Natural killer cell (primary cell): ENCODE measurements at regions of chr17 and their contacts with region 1.

Region 1: DNA sequence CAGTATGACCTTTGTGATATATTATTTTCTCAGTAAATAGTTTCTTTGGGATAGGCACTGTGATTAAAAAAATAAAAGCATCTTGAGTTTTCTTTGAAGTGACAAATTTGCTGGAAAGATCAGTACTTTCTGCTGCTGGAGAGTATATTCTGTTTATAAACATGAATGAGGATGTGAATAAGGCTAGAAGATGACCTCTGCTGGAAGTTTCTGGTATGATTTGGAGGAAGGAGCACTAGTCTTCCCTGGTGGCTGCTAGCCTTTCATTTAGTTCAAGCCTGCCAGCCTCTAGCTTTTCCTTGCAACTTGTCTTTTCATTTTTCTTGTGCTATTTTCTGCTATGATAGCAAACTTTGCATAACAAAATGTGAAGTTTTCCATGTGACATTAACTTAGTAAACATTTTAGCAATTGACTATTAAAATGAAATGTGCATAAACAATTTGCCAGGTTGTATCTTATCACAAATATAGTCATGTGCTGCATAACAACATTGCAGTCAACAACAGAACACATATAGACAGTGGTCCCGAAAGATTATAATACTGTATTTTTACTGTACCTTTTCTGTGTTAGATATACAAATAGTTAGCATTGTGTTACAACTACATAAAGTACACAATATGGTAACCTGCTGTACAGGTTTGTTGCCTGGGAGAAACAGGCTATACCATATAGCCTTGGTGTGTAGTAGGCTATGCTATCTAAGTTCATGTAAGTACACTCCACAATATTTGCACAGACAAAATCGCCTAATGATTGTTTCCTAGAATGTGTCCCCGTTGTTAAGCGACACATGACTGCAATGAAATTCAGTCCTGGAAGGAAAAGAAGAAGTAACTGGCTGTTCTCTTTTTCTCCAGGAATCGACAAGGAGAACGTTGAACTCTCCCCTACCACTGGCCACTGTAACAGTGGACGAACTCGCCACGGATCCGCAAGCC is 18.1 kb upstream of the RAB11FIP4 start:
- DNase-seq: peak in 1 of 2 donors; percentile 78
- ATAC-seq: peak; percentile 75 to 84 (median 81)
- H3K4me3 ChIP-seq: no peak overlapping the region
- H3K4me3 Mint-ChIP-seq: no peak overlapping the region
- H3K27ac ChIP-seq: no peak overlapping the region
- H3K27ac Mint-ChIP-seq: no peak overlapping the region
- H3K4me1 ChIP-seq: peaks cover 4% of the 10 kb centered on the region
- H3K4me1 Mint-ChIP-seq: no peaks in the 10 kb centered on the region
- H3K27me3 ChIP-seq: no peaks in the 10 kb centered on the region
- H3K27me3 Mint-ChIP-seq: no peaks in the 10 kb centered on the region
- CTCF ChIP-seq: peak; percentile 73

Region 2: GRCh38 chr17:31266042-31266441 is 107.4 kb before region 1 on chr17:
- intact Hi-C with region 1: loop called (anchors 1 kb)
- DNase-seq: peak in 1 of 2 donors; percentile 53
- ATAC-seq: no peak
- H3K4me3 ChIP-seq: no peak overlapping the region
- H3K4me3 Mint-ChIP-seq: no peak overlapping the region
- H3K27ac ChIP-seq: no peak overlapping the region
- H3K27ac Mint-ChIP-seq: no peak overlapping the region
- H3K4me1 ChIP-seq: no peaks in the 10 kb centered on the region
- H3K4me1 Mint-ChIP-seq: no peaks in the 10 kb centered on the region
- H3K27me3 ChIP-seq: no peaks in the 10 kb centered on the region
- H3K27me3 Mint-ChIP-seq: no peaks in the 10 kb centered on the region
- CTCF ChIP-seq: no peak

Region 3: DNA sequence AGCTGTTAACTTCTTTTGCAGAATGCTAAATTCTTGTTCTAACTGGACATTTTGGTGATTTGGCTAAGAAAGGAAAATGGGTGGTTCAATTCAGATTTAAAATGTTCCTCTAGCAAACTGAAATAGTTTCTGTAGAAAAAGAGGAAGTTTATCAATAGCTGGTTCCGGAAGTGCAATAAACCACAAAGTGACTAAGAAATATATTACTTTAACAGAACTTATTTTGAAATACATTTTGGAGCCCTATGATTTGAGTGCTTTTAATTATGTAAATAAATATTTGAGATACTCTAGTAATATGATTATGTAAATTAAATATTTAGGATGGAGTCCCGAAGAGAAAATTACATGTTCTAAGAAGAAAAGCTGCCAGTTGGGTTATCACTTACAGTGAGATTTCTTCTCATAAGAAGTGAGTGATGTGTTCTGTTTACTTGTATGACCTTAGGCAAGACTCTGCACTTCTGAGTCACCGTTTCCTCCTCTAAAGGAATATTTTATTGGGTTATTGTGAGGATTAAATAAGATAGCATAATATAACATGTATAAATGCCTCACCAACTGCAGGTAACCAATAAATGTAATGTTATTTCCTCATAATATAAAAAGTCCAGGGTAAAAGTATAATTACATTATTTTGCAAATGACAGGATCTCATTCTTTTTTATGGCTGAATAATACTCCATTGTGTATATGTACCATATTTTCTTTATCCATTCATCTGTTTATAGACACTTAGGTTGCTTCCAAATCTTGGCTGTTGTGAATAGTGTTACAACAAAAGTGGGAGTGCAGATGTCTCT is 59.2 kb before region 1 on chr17 and contains the start of gene EVI2B:
- intact Hi-C with region 1: loop called (anchors 2 kb)
- DNase-seq: peak in 1 of 2 donors; percentile 72
- ATAC-seq: peak; percentile 67 to 81 (median 70)
- H3K4me3 ChIP-seq: peak within 1 kb of the TSS; percentile 62
- H3K4me3 Mint-ChIP-seq: peak within 1 kb of the TSS; percentile 95
- H3K27ac ChIP-seq: peak within 1 kb of the TSS; percentile 80
- H3K27ac Mint-ChIP-seq: peak within 1 kb of the TSS; percentile 88 to 89
- H3K4me1 ChIP-seq: peaks cover 10% of the 10 kb centered on the region
- H3K4me1 Mint-ChIP-seq: peaks cover 55 to 73% of the 10 kb centered on the region in 2 donors
- H3K27me3 ChIP-seq: no peaks in the 10 kb centered on the region
- H3K27me3 Mint-ChIP-seq: no peaks in the 10 kb centered on the region
- CTCF ChIP-seq: no peak
- total RNA-seq, gene EVI2B: 89.6 to 103 (median 98.9) TPM

Region 4: GRCh38 chr17:31558748-31559644 is 185.6 kb after region 1 on chr17:
- intact Hi-C with region 1: no loop called
- DNase-seq: peak; percentile 48 to 72
- ATAC-seq: peak; percentile 91 to 96 (median 93)
- H3K4me3 ChIP-seq: peak overlapping the region; percentile 35
- H3K4me3 Mint-ChIP-seq: peak overlapping the region; percentile 89
- H3K27ac ChIP-seq: no peak overlapping the region
- H3K27ac Mint-ChIP-seq: peak overlapping the region in 1 of 2 donors; percentile 66
- H3K4me1 ChIP-seq: peaks cover 13% of the 10 kb centered on the region
- H3K4me1 Mint-ChIP-seq: peaks cover 0 to 3% of the 10 kb centered on the region in 2 donors
- H3K27me3 ChIP-seq: peaks cover 4% of the 10 kb centered on the region
- H3K27me3 Mint-ChIP-seq: peaks cover 0 to 11% of the 10 kb centered on the region in 2 donors
- CTCF ChIP-seq: peak; percentile 45

Region 5: GRCh38 chr17:31570231-31570630 is 196.8 kb after region 1 on chr17:
- intact Hi-C with region 1: no loop called
- DNase-seq: no peak
- ATAC-seq: no peak
- H3K4me3 ChIP-seq: no peak overlapping the region
- H3K4me3 Mint-ChIP-seq: no peak overlapping the region
- H3K27ac ChIP-seq: no peak overlapping the region
- H3K27ac Mint-ChIP-seq: no peak overlapping the region
- H3K4me1 ChIP-seq: no peaks in the 10 kb centered on the region
- H3K4me1 Mint-ChIP-seq: peaks cover 0 to 10% of the 10 kb centered on the region in 2 donors
- H3K27me3 ChIP-seq: no peaks in the 10 kb centered on the region
- H3K27me3 Mint-ChIP-seq: no peaks in the 10 kb centered on the region
- CTCF ChIP-seq: no peak